Activated T-helper 1 cell treated with anti-CD3 and anti-CD28 coated beads, Interleukin-12 subunit alpha, Interleukin-12 subunit beta, Interleukin-2, Interleukin-4 antibody, amounts not matched to agents 30 ng/mL and 10 ng/mL and 1 ng/mL, durations not matched to agents 14 hours and 24 hours and 36 hours (primary cell): ENCODE measurements at regions of chr3 and their contacts with region 1.

Region 1: GRCh38 chr3:63951492-63952247 is 39.5 kb upstream of the SCAANT1 start:
- DNase-seq: no peak
- H3K4me3 Mint-ChIP-seq: peak overlapping the region; percentile 81
- H3K27ac Mint-ChIP-seq: peak overlapping the region; percentile 70
- H3K4me1 Mint-ChIP-seq: peaks cover 58% of the 10 kb centered on the region
- H3K27me3 Mint-ChIP-seq: no peaks in the 10 kb centered on the region

Region 2: GRCh38 chr3:63993653-63994079 is 42.0 kb after region 1 on chr3:
- intact Hi-C with region 1: loop called (anchors 5 kb)
- DNase-seq: peak; percentile 32
- H3K4me3 Mint-ChIP-seq: no peak overlapping the region
- H3K27ac Mint-ChIP-seq: peak overlapping the region; percentile 35
- H3K4me1 Mint-ChIP-seq: peaks cover 30% of the 10 kb centered on the region
- H3K27me3 Mint-ChIP-seq: no peaks in the 10 kb centered on the region